ENCODE measurements at regions of chr10 and their contacts with region 1.

Region 1: DNA sequence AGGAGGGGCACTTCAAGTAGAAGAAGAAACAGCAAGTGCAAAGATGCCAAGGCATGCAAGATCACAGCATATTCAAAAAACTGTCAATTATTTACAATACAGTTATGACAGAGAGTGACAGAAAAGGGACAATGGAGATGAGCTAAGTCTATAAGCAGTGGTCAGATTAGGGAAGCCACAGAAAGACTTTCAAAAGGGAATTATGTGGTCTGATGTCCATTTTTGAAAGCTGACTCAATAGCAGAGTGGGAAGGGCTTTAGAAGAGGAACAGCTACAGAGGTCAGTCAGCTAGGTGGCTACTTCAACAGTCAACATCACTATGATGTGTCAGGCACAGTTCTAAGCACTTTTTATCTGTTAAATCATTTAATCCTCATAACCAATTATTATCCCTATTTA is 45.2 kb upstream of the SPOCK2 start:
- DNase-seq: no peak

Region 2: GRCh38 chr10:72173635-72174296 is 40.2 kb after region 1 on chr10:
- intact Hi-C with region 1: no loop called
- DNase-seq: no peak

Region 3: DNA sequence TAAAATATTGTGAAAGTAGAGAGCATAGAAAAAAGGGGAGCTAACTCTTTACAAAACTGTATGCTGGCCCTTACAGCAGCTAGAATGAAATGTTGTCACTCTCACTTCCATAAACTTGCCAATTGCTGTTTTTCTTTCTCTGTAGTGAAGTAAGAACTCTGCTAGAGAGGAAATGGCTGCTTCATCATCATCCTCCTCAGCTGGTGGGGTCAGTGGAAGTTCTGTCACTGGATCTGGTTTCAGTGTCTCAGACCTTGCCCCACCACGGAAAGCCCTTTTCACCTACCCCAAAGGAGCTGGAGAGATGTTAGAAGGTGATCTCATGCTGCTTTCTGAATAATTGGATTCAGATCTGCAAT is 90.2 kb after region 1 on chr10:
- intact Hi-C with region 1: loop called (anchors 5 kb)
- DNase-seq: no peak

Region 4: DNA sequence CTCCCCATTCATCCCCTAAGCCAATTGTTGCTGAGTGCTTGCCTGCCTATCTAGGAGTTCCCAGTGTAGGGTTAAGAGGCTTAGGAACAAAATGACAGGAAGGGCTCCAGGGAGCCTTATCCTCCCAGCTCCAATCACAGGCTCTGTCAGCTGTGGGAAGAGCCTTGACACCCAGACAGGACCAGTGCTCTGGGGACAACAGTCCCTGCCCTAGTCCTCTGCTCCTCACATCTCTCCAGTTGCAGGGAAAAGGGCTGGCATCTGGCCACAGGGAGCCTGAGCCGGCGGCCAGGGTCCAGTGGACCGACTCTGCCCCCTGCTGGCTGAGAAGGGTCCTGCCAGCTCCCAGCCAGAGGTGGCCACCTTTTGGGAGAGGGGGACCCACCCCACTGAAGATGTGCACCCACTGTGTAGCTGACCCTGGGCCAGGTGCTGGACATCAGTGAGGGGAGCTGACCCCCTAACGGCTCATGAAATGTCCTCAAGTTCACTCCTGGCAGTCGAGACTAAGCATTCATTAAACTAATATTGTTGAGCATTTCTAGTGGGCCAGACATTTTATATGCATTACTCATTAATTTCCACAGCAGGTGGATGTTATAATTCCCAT is 203.6 kb after region 1 on chr10:
- intact Hi-C with region 1: loop called (anchors 2 kb)
- DNase-seq: peak; percentile 94